Heart left ventricle (tissue), 16 donors: ENCODE measurements at regions of chr9 and their contacts with region 1.

Region 1: GRCh38 chr9:77648234-77649120 is at the start of gene GNA14:
- DNase-seq: peak; percentile 63 to 85 (median 69)
- ATAC-seq: peak; percentile 34 to 87 (median 82)
- H3K4me3 ChIP-seq: peak within 1 kb of the TSS; percentile 41 to 77 (median 56)
- H3K27ac ChIP-seq: peak within 1 kb of the TSS in 11 of 12 donors; percentile 23 to 79 (median 61)
- H3K4me1 ChIP-seq: peaks cover 0 to 26% (median 9%) of the 10 kb centered on the region in 12 donors
- H3K27me3 ChIP-seq: peaks cover 0 to 26% (median 0%) of the 10 kb centered on the region in 9 donors
- CTCF ChIP-seq: peak in 2 of 12 donors; percentile 10 to 11
- POLR2A ChIP-seq: no peak
- total RNA-seq, gene GNA14: 0.53 to 6.5 (median 1.4) TPM

Region 2: GRCh38 chr9:77469515-77470231 is 178.8 kb before region 1 on chr9:
- intact Hi-C with region 1: loop called in 1 of 10 experiments (anchors 10 kb)
- DNase-seq: no peak
- ATAC-seq: no peak
- H3K4me3 ChIP-seq: no peak overlapping the region
- H3K27ac ChIP-seq: no peak overlapping the region
- H3K4me1 ChIP-seq: no peaks in the 10 kb centered on the region
- H3K27me3 ChIP-seq: no peaks in the 10 kb centered on the region
- CTCF ChIP-seq: no peak
- POLR2A ChIP-seq: no peak

Region 3: GRCh38 chr9:77514886-77515711 is 133.4 kb before region 1 on chr9:
- intact Hi-C with region 1: loop called in 1 of 10 experiments (anchors 10 kb)
- DNase-seq: peak in 4 of 5 donors; percentile 44 to 67 (median 54)
- ATAC-seq: peak; percentile 75 to 94 (median 92)
- H3K4me3 ChIP-seq: no peak overlapping the region
- H3K27ac ChIP-seq: peak overlapping the region; percentile 29 to 84 (median 71)
- H3K4me1 ChIP-seq: peaks cover 0 to 37% (median 20%) of the 10 kb centered on the region in 12 donors
- H3K27me3 ChIP-seq: no peaks in the 10 kb centered on the region
- CTCF ChIP-seq: no peak
- POLR2A ChIP-seq: no peak

Region 4: GRCh38 chr9:77598524-77598923 is 50.0 kb before region 1 on chr9:
- intact Hi-C with region 1: loop called in 2 of 10 experiments (anchors 5 kb)
- DNase-seq: peak in 4 of 5 donors; percentile 31 to 59 (median 54)
- ATAC-seq: peak in 3 of 4 donors; percentile 72 to 90 (median 83)
- H3K4me3 ChIP-seq: no peak overlapping the region
- H3K27ac ChIP-seq: peak overlapping the region in 10 of 12 donors; percentile 25 to 80 (median 62)
- H3K4me1 ChIP-seq: peaks cover 0 to 58% (median 34%) of the 10 kb centered on the region in 12 donors
- H3K27me3 ChIP-seq: no peaks in the 10 kb centered on the region
- CTCF ChIP-seq: no peak
- POLR2A ChIP-seq: no peak

Region 5: GRCh38 chr9:77614645-77615044 is 33.8 kb before region 1 on chr9:
- intact Hi-C with region 1: loop called in 2 of 10 experiments (anchors 5 kb)
- DNase-seq: no peak
- ATAC-seq: no peak
- H3K4me3 ChIP-seq: no peak overlapping the region
- H3K27ac ChIP-seq: no peak overlapping the region
- H3K4me1 ChIP-seq: no peaks in the 10 kb centered on the region
- H3K27me3 ChIP-seq: no peaks in the 10 kb centered on the region
- CTCF ChIP-seq: no peak
- POLR2A ChIP-seq: no peak

Region 6: DNA sequence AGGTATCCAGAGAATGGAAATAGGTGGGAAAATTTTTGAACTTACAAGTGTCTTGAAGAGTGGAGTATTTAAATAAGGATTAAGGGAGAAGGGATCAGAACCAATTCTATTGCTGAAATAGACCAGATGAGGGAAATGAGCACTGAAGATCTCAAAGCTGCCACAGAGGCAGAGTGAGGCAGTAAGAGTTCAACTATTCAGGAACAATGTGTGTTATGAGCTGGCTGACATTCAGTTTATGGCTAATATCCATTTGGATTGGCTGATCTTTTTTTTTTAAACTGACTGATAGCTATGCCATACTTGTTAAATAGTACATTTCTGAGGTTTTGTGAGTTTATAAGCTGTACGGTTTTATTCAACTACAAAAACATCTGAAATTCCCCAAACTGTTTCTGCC is 94.9 kb after region 1 on chr9:
- intact Hi-C with region 1: loop called in 1 of 10 experiments (anchors 10 kb)
- DNase-seq: no peak
- ATAC-seq: no peak
- H3K4me3 ChIP-seq: no peak overlapping the region
- H3K27ac ChIP-seq: peak overlapping the region in 1 of 12 donors; percentile 11
- H3K4me1 ChIP-seq: peaks cover 0 to 24% (median 3%) of the 10 kb centered on the region in 12 donors
- H3K27me3 ChIP-seq: no peaks in the 10 kb centered on the region
- CTCF ChIP-seq: no peak
- POLR2A ChIP-seq: no peak